AG04450 (cell line): ENCODE measurements at regions of chr3 and their contacts with region 1.

Region 1: DNA sequence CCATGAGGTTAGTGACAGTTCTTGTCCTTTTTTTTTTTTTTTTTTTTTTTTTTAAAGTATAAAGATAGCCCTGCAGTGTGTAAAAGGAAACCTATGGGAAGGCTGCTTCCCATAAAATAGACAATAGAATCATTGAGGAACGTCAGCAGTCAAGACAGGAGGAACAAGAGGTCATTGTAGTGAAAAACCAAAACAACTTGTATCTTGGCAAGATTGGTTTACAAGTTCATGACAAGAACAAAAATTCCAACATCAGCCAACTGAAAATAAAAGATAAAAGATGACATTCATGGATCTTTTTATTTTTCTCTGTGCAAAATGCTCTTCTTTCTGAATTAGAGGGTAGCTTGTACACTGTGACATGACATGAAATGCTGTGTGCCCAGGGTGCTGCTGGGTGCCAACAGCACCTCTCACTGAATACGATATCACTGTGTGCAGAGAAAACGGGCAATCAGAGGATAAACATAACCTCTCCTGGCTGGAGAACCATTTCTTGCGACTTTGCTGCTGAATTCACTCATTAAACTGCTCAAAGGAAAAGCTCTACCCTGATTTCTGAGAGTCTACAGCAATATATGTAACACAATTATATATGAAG is 30.1 kb upstream of the IP6K2 start:
- DNase-seq: no peak
- H3K4me3 ChIP-seq: no peak overlapping the region
- H3K27ac ChIP-seq: no peak overlapping the region
- H3K27me3 ChIP-seq: no peaks in the 10 kb centered on the region
- CTCF ChIP-seq: no peak

Region 2: DNA sequence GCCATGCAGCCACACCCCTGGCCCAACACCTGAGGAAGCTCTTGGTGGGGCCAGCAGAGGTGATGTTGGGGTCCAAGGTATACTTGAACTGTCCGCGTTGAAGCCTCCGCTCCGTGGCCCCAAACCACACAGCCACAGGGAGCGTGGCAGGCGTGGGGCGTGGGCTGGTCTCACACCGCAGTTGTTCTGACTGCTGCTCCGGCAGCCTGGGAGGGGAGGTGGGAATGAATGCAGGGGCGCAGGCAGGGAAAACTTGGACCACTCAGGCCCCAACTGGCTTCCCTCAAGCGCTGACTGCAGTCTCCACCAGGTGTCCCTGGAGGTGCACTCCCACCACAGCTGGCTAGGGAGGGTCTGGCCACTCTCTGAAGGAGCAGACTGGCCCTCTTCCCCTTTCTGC is 331.6 kb before region 1 on chr3:
- CTCF ChIA-PET with region 1: no interaction called
- POLR2A ChIA-PET with region 1: no interaction called
- DNase-seq: no peak
- H3K4me3 ChIP-seq: no peak overlapping the region
- H3K27ac ChIP-seq: no peak overlapping the region
- H3K27me3 ChIP-seq: no peaks in the 10 kb centered on the region
- CTCF ChIP-seq: no peak

Region 3: DNA sequence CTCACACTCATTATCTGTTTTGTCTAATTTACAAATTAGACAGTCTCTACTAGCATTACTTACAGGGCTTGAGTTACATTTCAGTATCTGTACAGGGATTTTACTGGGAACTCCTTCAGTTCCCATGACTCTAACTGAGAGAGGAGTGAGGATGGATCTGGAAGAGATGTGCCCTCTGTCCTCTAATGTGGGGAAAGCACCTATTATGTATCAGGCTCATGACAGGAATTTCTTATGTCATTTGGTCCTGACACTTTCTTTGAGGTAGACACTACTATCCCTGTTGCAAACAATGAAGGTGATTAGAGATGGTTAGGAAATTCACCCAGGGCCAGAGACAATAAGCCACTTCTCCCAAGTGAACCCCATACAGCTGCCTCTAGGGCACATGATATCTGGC is 50.5 kb before region 1 on chr3:
- CTCF ChIA-PET with region 1: interaction called, 11 read pairs
- POLR2A ChIA-PET with region 1: no interaction called
- DNase-seq: no peak
- H3K4me3 ChIP-seq: no peak overlapping the region
- H3K27ac ChIP-seq: no peak overlapping the region
- H3K27me3 ChIP-seq: no peaks in the 10 kb centered on the region
- CTCF ChIP-seq: no peak

Region 4: GRCh38 chr3:48765376-48765775 is 18.3 kb after region 1 on chr3:
- CTCF ChIA-PET with region 1: no interaction called
- POLR2A ChIA-PET with region 1: no interaction called
- DNase-seq: no peak
- H3K4me3 ChIP-seq: no peak overlapping the region
- H3K27ac ChIP-seq: no peak overlapping the region
- H3K27me3 ChIP-seq: no peaks in the 10 kb centered on the region
- CTCF ChIP-seq: peak; percentile 18; the same call in 1 of the 2 replicates

Region 5: DNA sequence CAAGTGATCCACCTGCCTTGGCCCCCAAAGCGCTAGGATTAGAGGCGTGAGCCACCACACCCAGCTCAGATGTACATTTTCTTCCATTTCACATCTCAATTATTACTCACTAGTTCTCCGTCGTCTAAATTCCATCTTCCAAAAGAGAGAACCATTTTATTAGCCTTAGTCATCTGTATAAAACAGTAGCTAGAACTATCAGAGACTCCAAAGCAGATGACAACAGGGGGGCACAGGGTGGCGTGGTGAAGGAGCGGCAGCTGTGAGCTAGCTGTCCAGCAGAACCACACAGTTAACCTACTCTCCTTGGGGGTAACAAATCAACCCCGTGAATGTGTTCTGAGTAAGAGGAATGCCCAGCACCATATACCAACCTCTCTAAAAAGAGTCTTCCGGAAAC is 144.5 kb after region 1 on chr3:
- CTCF ChIA-PET with region 1: no interaction called
- POLR2A ChIA-PET with region 1: no interaction called
- DNase-seq: no peak
- H3K4me3 ChIP-seq: no peak overlapping the region
- H3K27ac ChIP-seq: no peak overlapping the region
- H3K27me3 ChIP-seq: no peaks in the 10 kb centered on the region
- CTCF ChIP-seq: no peak